Head of caudate nucleus (tissue), 42 donors: ENCODE measurements at regions of chr11 and their contacts with region 1.

Region 1: DNA sequence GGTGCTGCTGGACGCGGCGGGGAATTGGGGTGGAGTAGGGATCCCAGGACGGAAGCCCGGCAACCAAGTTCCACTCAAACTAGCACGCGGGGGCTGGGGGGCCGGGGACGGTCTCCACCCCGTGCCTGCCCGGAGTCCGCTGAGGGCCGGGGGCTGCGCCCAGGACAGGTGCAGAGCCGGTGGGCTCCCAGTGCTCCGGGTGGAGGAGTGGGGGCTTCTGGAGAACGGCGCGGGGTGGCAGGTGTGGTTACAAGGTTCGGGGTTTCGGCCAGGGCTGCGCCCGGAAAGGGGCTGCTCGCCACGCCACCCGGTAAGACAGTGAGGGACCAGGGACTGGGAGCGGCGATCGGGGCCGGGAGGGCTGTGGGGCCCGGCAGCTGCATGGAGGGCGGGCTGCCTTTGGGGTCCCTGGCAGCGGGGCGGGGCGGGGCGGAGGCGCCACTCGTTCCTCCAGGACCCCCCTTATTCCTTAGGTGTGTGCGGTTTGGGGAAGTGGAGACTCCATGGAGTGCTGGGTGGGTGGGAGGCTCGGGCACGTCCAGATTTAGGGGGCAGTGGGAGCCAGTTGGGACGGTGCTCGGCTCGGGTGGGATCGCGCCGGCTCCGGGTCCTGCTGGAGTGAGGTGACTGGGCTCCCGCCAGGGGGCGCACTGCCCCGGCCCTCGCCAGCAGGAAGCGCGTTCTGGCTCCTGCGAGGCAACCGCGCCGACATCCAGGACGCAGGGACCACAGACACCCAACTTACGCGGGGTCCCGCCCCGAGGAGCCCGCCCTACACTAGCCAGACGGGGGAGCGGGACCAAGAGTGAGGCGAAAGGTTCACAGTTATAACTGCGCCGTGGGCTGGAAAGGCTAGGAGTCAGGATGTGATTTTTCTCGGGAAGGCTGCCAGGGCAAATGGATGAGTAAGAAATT is 868 bp downstream of the TSPAN18 start:
- DNase-seq: peak; percentile 56 to 93 (median 86)

Region 2: DNA sequence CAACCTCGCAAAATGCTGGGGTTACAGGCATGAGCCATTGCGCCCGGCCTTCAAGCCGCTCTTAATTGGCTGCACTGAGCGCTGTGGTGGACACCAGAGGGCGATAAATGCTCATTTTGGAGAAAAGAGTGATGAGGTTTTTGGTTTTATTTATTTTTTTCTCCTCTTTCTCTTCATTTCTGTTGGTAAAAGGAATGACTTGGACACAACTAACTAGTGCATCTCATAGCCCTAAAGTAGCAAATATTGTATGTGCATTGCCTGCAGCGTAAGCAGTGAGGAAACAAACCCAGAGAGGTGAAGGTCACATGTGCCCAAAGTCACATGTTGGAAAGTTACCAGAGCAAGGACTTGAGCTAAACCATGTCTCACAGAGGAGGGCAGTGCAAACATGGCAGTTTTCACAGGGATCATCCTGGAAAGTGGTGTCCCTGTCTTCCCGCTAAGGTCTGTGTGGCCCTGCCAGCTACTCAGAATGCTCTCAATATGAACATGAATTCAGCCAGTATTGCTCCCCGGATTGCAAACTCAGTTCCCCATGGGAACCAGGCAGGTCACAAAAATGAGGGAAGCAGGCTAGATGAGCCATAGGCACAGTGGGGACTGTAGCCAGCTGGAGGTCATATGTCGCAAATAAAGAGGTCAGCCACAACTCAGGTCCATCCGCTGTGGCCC is 170.8 kb before region 1 on chr11:
- intact Hi-C with region 1: loop called (anchors 10 kb)
- DNase-seq: peak; percentile 35 to 92 (median 76)

Region 3: GRCh38 chr11:44893846-44894617 is 166.4 kb after region 1 on chr11:
- intact Hi-C with region 1: loop called (anchors 5 kb)
- DNase-seq: peak; percentile 63 to 90 (median 82)

Region 4: GRCh38 chr11:44911029-44911814 is 183.6 kb after region 1 on chr11:
- intact Hi-C with region 1: loop called (anchors 10 kb)
- DNase-seq: peak; percentile 57 to 99 (median 92)